K562 (cell line): ENCODE measurements at regions of chr11 and their contacts with region 1.

Region 1: GRCh38 chr11:59429924-59430516 is 3.8 kb upstream of the OR5A2 start:
- DNase-seq: peak; percentile 56 to 68 (median 66)
- ATAC-seq: peak; percentile 86
- H3K4me3 ChIP-seq: no peak overlapping the region
- H3K27ac ChIP-seq: no peak overlapping the region
- H3K4me1 ChIP-seq: no peaks in the 10 kb centered on the region
- H3K27me3 ChIP-seq: no peaks in the 10 kb centered on the region
- CTCF ChIP-seq: peak; percentile 57 to 88 (median 76); a peak in 5 of 6 replicates
- EP300 ChIP-seq: no peak
- POLR2A ChIP-seq: no peak
- RAD21 ChIP-seq: peak; percentile 64 to 81

Region 2: DNA sequence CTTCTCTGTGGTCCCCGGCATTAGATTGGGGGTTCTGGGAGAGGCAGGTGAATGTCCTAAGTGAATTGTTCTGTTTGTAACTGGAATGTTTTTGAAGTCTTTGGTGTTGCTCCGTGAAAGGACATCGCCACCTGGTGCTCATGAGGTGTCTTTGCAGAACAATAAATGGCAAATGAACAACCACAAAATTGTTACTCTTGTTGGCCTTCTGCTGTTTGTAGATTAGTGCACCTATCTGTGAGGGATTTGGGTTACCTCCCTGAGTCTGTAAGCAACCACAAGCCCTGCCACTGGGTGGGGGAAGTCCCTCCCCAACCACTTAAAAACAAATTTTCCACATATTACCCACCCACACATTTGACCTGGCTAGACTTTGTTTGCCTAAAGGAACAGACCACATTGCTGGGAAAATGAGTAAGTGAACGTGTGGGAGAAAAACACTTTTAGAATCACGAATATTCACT is 222.0 kb before region 1 on chr11:
- CTCF ChIA-PET with region 1: no interaction called
- POLR2A ChIA-PET with region 1: no interaction called
- in situ Hi-C with region 1: no loop called
- intact Hi-C with region 1: loop called (anchors 2 kb)
- DNase-seq: peak; percentile 30 to 56 (median 40)
- ATAC-seq: peak; percentile 82
- H3K4me3 ChIP-seq: no peak overlapping the region
- H3K27ac ChIP-seq: no peak overlapping the region
- H3K4me1 ChIP-seq: no peaks in the 10 kb centered on the region
- H3K27me3 ChIP-seq: peaks cover 4 to 37% of the 10 kb centered on the region in 2 experiments; a peak in 3 of 5 replicates
- CTCF ChIP-seq: peak; percentile 71 to 76 (median 71)
- EP300 ChIP-seq: no peak
- POLR2A ChIP-seq: no peak
- RAD21 ChIP-seq: peak; percentile 43 to 63

Region 3: DNA sequence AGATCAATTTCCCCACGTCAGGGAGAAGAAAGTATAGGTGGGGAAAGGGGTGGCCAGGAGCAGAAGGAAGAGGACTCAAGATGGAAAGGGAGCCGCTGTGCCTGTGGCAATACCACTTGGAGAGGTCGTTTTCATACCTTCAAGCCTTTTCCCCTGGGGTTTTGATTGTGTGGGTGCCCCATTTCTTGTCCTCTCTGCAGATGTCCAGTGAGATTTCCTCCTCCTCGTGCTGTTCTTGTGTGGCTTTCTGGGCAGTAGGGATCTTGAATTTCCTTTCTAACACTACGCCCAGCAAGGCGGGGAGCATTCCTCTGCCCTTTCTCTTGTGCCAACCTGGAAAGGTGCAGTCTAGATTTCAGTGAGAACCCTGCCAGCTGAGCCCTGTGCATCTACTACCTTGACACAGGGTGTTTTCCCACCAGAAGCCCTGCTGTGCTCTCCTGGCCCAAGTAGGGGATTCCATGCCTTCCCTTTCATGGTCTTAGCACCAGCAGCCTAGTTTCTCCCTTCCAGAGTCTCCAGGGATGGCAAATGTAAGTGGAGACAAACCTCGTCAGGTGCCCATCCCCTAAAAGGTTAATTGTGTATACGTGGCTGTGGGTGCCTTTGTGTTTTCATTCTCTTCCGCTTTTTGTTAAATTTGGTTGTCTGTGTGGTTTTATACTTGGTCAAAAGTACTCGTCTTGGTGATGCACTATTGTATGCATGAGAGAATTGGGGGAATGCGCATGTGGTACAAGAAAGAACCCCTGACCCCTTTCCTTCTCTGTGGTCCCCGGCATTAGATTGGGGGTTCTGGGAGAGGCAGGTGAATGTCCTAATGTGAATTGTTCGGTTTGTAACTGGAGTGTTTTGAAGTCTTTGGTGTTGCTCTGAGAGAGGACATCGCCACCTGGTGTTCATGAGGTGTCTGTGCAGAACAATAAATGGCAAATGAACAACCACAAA is 145.9 kb before region 1 on chr11:
- CTCF ChIA-PET with region 1: no interaction called
- POLR2A ChIA-PET with region 1: no interaction called
- in situ Hi-C with region 1: no loop called
- intact Hi-C with region 1: loop called (anchors 5 kb)
- DNase-seq: peak; percentile 31 to 52 (median 40)
- ATAC-seq: peak; percentile 83
- H3K4me3 ChIP-seq: no peak overlapping the region
- H3K27ac ChIP-seq: no peak overlapping the region
- H3K4me1 ChIP-seq: no peaks in the 10 kb centered on the region
- H3K27me3 ChIP-seq: no peaks in the 10 kb centered on the region
- CTCF ChIP-seq: peak; percentile 67 to 78 (median 75)
- EP300 ChIP-seq: no peak
- POLR2A ChIP-seq: no peak
- RAD21 ChIP-seq: peak; percentile 54 to 72